Prostate gland (tissue), 2 donors: ENCODE measurements at regions of chr6 and their contacts with region 1.

Region 1: GRCh38 chr6:168314948-168315347 is 4.6 kb downstream of the DACT2 start:
- DNase-seq: peak; percentile 89
- H3K4me3 ChIP-seq: no peak overlapping the region
- H3K27ac ChIP-seq: peak overlapping the region; percentile 27 to 58
- H3K4me1 ChIP-seq: peaks cover 8% of the 10 kb centered on the region
- H3K27me3 ChIP-seq: no peaks in the 10 kb centered on the region
- CTCF ChIP-seq: peak; percentile 17 to 67 (median 38)
- POLR2A ChIP-seq: no peak

Region 2: GRCh38 chr6:168150551-168151320 is 164.2 kb before region 1 on chr6:
- intact Hi-C with region 1: loop called (anchors 5 kb)
- DNase-seq: peak; percentile 39
- H3K4me3 ChIP-seq: no peak overlapping the region
- H3K27ac ChIP-seq: no peak overlapping the region
- H3K4me1 ChIP-seq: no peaks in the 10 kb centered on the region
- H3K27me3 ChIP-seq: no peaks in the 10 kb centered on the region
- CTCF ChIP-seq: peak; percentile 28 to 88 (median 70)
- POLR2A ChIP-seq: no peak

Region 3: DNA sequence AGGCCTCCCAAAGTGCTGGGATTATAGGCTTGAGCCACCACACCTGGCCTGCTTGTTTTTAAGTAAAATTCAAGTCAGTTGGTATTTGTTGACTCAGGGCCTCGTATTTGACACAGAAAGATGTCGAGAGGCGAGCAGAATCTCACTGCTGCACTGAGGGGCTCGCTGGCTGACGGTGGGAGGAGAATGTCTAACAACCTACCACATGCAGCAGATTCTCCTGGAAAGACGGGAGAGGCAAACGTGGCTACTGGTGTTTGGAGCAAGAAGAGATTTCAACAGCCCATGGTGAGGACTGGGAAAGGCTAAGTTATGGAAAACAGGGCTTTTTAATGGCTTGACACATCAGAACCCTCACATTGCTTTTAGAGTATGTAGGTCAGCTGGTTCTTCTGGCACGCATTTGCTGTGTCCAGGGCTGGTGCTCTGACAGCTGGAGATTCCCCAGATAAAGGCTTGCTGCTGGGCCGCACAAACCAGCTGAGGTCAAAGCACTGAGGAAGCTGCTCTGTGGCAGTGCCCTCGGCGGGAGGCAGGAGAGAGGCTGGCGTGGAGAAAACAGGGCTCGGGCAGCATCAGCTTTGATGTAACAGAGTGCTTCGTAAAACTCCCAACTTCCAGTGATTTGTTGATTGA is 151.7 kb before region 1 on chr6:
- intact Hi-C with region 1: loop called (anchors 5 kb)
- DNase-seq: peak; percentile 4
- H3K4me3 ChIP-seq: no peak overlapping the region
- H3K27ac ChIP-seq: peak overlapping the region; percentile 46 to 47
- H3K4me1 ChIP-seq: peaks cover 3% of the 10 kb centered on the region
- H3K27me3 ChIP-seq: no peaks in the 10 kb centered on the region
- CTCF ChIP-seq: no peak
- POLR2A ChIP-seq: no peak

Region 4: GRCh38 chr6:168370310-168370991 is 55.5 kb after region 1 on chr6:
- intact Hi-C with region 1: no loop called
- DNase-seq: peak; percentile 78
- H3K4me3 ChIP-seq: no peak overlapping the region
- H3K27ac ChIP-seq: no peak overlapping the region
- H3K4me1 ChIP-seq: no peaks in the 10 kb centered on the region
- H3K27me3 ChIP-seq: no peaks in the 10 kb centered on the region
- CTCF ChIP-seq: peak; percentile 91 to 97 (median 96)
- POLR2A ChIP-seq: no peak